PC-3 (cell line): ENCODE measurements at regions of chr16 and their contacts with region 1.

Region 1: GRCh38 chr16:48385272-48386150 is at the start of gene SIAH1:
- DNase-seq: peak; percentile 73
- ATAC-seq: peak; percentile 64
- H3K4me3 ChIP-seq: peak within 1 kb of the TSS; percentile 88
- H3K27ac ChIP-seq: peak within 1 kb of the TSS; percentile 37
- H3K4me1 ChIP-seq: peaks cover 8% of the 10 kb centered on the region; the same call in 1 of the 2 replicates
- H3K27me3 ChIP-seq: no peaks in the 10 kb centered on the region
- CTCF ChIP-seq: no peak
- total RNA-seq, gene SIAH1: 10.9 and 16.2 TPM in 2 replicates

Region 2: DNA sequence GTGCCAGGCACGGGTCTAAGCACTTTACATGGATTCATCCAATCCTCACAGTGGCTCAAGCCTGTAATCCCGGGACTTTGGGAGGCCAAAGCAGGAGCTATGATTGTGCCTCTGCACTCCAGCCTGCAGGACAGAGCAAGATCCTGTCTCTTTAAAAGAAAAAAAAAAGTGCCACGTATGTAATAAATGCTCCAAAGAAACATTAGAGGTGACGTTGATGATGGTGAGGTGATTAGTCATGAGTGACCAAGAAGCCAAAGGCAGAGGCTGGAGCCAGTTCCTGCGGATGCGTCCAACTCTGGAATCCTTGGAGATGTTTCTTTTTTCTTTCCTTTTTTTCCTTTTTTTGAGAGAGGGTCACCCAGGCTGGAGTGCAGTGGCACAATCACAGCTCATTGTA is 59.1 kb after region 1 on chr16:
- CTCF ChIA-PET with region 1: no interaction called
- POLR2A ChIA-PET with region 1: no interaction called
- intact Hi-C with region 1: loop called (anchors 5 kb)
- DNase-seq: peak; percentile 85
- ATAC-seq: peak; percentile 68
- H3K4me3 ChIP-seq: peak overlapping the region; percentile 48; the same call in 1 of the 2 replicates
- H3K27ac ChIP-seq: peak overlapping the region; percentile 93
- H3K4me1 ChIP-seq: peaks cover 25% of the 10 kb centered on the region
- H3K27me3 ChIP-seq: no peaks in the 10 kb centered on the region
- CTCF ChIP-seq: no peak